Mammary epithelial cell (primary cell): ENCODE measurements at regions of chr2 and their contacts with region 1.

Region 1: DNA sequence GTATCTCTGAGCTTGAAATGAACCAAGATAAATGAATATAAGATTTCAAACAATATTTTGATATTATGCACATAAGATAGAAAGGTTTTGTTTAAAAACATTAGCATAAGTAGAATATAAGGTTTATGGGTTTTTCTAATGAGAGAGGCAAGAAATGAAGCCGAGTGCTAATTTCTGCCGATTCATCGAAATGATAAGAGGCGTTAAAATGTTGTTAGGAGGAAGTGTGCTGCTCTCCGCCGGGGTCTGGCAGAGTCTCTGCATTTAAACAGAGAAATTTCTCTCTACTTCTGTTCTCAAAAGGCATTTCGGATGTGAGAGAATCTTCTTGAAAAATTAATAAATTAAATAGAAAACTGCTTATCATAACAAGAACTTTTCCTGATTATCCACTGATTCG is 83.6 kb downstream of the MRPS9 start:
- DNase-seq: no peak
- H3K4me3 ChIP-seq: no peak overlapping the region
- H3K27ac ChIP-seq: no peak overlapping the region
- H3K4me1 ChIP-seq: no peaks in the 10 kb centered on the region
- H3K27me3 ChIP-seq: peaks cover 5% of the 10 kb centered on the region
- CTCF ChIP-seq: no peak

Region 2: DNA sequence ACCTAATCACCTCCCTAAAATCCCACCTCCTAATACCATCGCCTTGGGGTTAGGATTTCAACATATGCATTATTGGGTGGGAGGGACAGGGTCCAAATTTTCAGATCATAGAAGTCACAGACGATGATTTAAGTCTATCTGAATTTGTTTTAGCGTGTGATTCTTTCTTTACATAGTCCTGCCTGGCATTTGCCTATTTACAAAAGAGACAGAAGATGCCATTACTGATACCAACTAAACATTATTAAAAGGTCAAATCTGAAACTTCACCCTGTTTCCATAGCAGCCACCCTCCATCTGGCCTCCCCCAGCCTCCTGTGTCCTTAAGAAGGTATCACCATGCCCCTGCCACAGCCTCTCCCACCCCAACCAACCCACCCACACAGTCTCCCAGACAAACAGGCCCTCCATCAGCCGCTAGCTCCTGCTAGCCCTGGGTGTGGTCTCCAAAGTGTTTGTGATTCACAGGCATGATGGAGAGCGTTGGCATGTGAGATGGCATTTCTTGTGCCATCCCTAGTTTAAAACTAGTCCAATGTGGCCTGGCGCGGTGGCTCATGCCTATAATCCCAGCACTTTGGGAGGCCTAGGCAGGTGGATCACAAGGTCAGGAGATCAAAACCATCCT is 75.1 kb after region 1 on chr2:
- CTCF ChIA-PET with region 1: no interaction called
- dilution Hi-C with region 1: loop called (anchors 5 kb)
- in situ Hi-C with region 1: no loop called
- intact Hi-C with region 1: no loop called
- DNase-seq: no peak
- H3K4me3 ChIP-seq: no peak overlapping the region
- H3K27ac ChIP-seq: no peak overlapping the region
- H3K4me1 ChIP-seq: no peaks in the 10 kb centered on the region
- H3K27me3 ChIP-seq: peaks cover 2% of the 10 kb centered on the region
- CTCF ChIP-seq: no peak

Region 3: DNA sequence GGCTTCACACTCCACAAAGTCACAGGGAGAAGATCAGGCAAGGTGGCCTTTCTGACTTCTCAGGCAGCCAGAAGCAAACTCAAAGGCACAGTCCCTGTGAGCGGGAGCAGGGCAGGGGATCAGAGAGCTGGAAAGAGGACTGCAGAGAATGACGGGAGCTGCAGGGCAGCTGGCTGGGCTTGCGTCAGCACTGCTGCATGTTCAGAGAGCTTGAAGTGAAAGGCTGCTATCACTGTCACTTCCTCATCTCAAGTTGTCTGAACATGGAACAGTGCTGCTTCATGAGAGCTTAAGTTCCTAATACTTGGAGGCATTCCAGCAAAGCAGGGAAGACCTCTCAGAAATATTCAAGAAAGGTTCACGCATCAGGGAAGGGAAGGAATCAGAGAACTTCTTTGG is 187.7 kb after region 1 on chr2:
- CTCF ChIA-PET with region 1: no interaction called
- dilution Hi-C with region 1: no loop called
- in situ Hi-C with region 1: no loop called
- intact Hi-C with region 1: no loop called
- DNase-seq: no peak
- H3K4me3 ChIP-seq: no peak overlapping the region
- H3K27ac ChIP-seq: no peak overlapping the region
- H3K4me1 ChIP-seq: no peaks in the 10 kb centered on the region
- H3K27me3 ChIP-seq: no peaks in the 10 kb centered on the region
- CTCF ChIP-seq: no peak

Region 4: DNA sequence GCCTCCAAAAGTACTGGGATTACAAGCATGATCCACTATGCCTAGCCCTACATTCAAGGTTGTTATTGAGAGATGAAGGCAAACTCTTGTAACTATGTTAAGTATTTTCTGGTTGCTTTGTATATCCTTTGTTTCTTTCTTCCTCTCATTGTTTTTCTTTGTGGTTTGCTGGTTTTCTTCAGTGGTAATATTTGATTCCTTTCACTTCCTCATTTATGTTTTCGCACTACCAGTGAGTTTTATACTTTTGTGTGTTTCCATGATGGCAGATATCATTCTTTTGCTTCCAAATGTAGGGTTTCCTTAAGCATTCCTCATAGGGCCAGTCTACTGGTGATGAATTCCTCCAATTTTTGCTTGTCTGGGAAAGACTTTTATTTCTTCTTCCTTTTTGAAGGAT is 713.5 kb after region 1 on chr2:
- CTCF ChIA-PET with region 1: no interaction called
- dilution Hi-C with region 1: no loop called
- in situ Hi-C with region 1: no loop called
- intact Hi-C with region 1: no loop called
- DNase-seq: no peak
- H3K4me3 ChIP-seq: no peak overlapping the region
- H3K27ac ChIP-seq: no peak overlapping the region
- H3K4me1 ChIP-seq: peaks cover 6% of the 10 kb centered on the region
- H3K27me3 ChIP-seq: no peaks in the 10 kb centered on the region
- CTCF ChIP-seq: no peak